Activated B cell treated with CpG ODN at 0.5 μM for 24 hours (primary cell): ENCODE measurements at regions of chr16 and their contacts with region 1.

Region 1: DNA sequence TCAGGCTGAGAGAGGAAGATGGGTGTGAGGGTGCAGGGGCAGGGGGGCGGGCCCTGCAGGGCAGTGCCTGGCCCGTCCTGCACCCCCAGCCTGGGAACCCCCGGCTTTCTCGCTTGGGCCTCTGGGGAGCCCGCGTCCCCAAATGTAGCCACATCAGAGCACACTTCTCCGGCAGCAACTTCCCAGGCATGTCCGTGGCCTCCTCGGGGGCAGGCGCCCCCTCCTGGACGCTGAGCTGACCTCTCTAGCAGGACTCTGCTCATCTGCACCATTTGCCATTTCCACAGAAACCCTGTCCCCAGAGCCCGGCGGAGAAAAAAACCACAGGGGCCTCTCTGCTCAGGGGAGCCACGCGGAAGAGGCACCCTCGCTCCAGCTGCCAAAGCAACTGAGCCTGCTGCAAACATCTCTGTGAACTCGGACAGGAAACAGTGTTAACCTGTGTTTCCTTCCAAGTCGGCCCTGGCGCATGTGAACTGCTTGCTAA is 63.4 kb downstream of the KLHDC4 start:
- DNase-seq: peak; percentile 57
- ATAC-seq: peak; percentile 46
- H3K4me3 Mint-ChIP-seq: peak overlapping the region; percentile 57
- H3K27ac Mint-ChIP-seq: peak overlapping the region; percentile 82
- H3K4me1 Mint-ChIP-seq: peaks cover 58% of the 10 kb centered on the region
- H3K27me3 Mint-ChIP-seq: no peaks in the 10 kb centered on the region
- CTCF ChIP-seq: no peak

Region 2: GRCh38 chr16:87492721-87493607 is 209.4 kb before region 1 on chr16 and contains the start of gene ZCCHC14:
- CTCF ChIA-PET with region 1: no interaction called
- POLR2A ChIA-PET with region 1: no interaction called
- intact Hi-C with region 1: loop called (anchors 10 kb)
- DNase-seq: peak; percentile 89
- ATAC-seq: peak; percentile 91
- H3K4me3 Mint-ChIP-seq: peak within 1 kb of the TSS; percentile 82
- H3K27ac Mint-ChIP-seq: peak within 1 kb of the TSS; percentile 59
- H3K4me1 Mint-ChIP-seq: peaks cover 46% of the 10 kb centered on the region
- H3K27me3 Mint-ChIP-seq: peaks cover 22% of the 10 kb centered on the region
- CTCF ChIP-seq: no peak
- total RNA-seq, gene ZCCHC14: 3.4 and 3.8 TPM in 2 replicates

Region 3: DNA sequence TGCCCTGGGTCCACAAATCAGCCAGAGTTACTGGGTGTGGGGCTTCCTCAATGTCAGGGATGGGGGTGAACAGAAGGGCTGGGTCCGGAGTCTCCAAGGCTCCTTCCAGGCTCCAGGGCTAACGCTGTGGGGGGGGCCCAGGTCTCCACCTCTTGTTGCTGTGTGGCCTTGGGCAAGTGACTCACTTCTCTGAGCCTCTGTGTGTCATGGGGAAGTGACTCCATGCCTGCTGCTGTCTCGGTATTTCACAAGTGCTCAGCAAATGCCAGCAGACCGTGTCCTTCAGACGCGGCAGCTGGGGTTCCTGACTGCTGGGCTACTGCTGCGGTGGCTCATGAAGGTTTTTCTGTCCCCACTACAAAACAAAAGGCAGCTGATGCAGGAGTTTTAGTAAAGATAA is 73.4 kb before region 1 on chr16:
- CTCF ChIA-PET with region 1: no interaction called
- POLR2A ChIA-PET with region 1: no interaction called
- intact Hi-C with region 1: no loop called
- DNase-seq: no peak
- ATAC-seq: peak; percentile 75
- H3K4me3 Mint-ChIP-seq: no peak overlapping the region
- H3K27ac Mint-ChIP-seq: no peak overlapping the region
- H3K4me1 Mint-ChIP-seq: peaks cover 3% of the 10 kb centered on the region
- H3K27me3 Mint-ChIP-seq: peaks cover 27% of the 10 kb centered on the region
- CTCF ChIP-seq: no peak

Region 4: DNA sequence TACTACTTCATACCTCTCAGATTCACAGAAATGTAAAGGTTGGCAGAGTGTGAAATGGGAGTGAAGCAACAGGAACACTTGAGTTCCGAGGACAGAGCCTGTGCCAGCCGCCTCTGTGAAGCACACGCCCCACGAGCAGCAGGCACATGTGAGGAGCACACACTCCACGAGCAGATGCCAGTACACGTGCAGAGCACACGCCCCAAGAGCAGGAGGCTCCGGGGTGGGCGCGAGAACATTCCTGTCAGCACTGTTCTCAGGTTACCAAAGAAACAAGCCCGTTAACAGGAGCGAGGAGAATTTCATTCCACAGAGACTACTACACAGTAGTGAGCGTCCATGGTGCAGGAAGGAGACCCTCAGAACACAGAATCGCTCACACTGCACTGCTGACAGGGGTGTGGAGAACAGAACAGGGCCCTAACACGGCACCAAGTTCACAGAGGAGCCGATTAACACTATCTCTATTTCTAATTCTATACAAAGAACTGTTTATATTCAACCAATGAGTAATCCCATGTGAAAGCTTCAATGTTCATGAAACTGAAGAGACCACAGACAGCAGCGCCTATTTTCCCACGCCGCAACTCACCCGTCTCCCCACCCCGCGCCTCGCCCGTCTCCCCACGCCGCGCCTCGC is 23.3 kb after region 1 on chr16:
- CTCF ChIA-PET with region 1: interaction called, 5 read pairs
- POLR2A ChIA-PET with region 1: interaction called, 8 read pairs
- intact Hi-C with region 1: loop called (anchors 2 kb)
- DNase-seq: no peak
- ATAC-seq: no peak
- H3K4me3 Mint-ChIP-seq: no peak overlapping the region
- H3K27ac Mint-ChIP-seq: peak overlapping the region; percentile 74
- H3K4me1 Mint-ChIP-seq: peaks cover 31% of the 10 kb centered on the region
- H3K27me3 Mint-ChIP-seq: no peaks in the 10 kb centered on the region
- CTCF ChIP-seq: no peak

Region 5: GRCh38 chr16:87860553-87861299 is 158.4 kb after region 1 on chr16:
- CTCF ChIA-PET with region 1: no interaction called
- POLR2A ChIA-PET with region 1: no interaction called
- intact Hi-C with region 1: loop called (anchors 5 kb)
- DNase-seq: no peak
- ATAC-seq: peak; percentile 40
- H3K4me3 Mint-ChIP-seq: no peak overlapping the region
- H3K27ac Mint-ChIP-seq: peak overlapping the region; percentile 56
- H3K4me1 Mint-ChIP-seq: peaks cover 30% of the 10 kb centered on the region
- H3K27me3 Mint-ChIP-seq: no peaks in the 10 kb centered on the region
- CTCF ChIP-seq: no peak